Cardiac septum (tissue), 1 donor: ENCODE measurements at regions of chr17 and their contacts with region 1.

Region 1: GRCh38 chr17:8894673-8895578 is 27.5 kb upstream of the PIK3R6 start:
- DNase-seq: peak; percentile 70

Region 2: DNA sequence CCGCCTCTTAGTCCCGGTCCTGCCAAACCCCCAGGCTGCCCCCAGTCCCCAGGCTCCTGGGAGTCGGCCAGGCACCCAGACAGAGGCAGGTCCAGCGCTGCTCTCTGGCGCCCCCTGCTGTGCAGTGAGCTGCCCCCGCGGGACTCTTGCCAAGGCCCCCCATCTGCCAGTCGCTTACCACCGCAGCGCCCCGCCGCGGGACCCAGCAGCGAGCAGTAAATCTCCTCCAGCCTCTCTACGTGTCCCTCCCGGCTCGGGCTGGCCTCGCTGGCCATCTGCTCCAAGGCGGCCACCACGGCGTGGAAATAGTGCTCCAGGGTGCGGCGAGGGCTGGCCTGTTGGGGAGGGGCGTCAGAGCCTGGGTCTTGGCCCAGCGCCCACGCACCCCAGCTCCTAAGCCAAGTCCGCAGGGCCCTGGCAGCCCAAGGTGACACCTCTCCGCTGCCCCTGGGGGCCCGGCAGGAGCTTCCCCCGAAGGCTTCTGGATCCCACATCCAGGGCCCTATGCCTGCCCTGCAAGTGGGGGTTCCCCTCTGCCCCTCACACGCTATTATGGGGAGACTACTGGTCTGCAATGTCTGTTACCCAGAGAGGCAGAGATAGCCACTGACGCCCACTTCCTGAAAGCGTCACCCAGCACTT is 62.1 kb before region 1 on chr17:
- intact Hi-C with region 1: no loop called
- DNase-seq: no peak

Region 3: DNA sequence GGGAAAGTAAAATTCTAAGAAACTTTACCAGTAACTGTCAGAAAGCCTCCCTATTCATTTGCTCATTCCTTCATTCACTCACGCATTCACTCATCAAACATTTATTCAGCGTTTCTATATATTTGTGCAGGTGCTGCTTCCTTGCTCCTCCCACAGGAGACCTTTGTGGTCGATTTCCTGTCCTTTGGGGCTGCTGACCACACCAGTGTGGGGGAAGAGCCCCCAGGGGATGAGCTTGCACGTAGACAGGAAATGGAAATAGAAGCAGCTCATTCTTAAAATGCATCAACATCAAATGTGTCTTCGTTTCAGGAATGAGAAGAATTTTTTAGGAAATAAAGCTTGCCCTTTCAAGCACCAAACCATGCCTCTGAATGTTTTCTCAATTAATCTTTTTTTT is 37.0 kb before region 1 on chr17:
- intact Hi-C with region 1: loop called (anchors 5 kb)
- DNase-seq: peak; percentile 78